PC-3 (cell line): ENCODE measurements at regions of chrX and their contacts with region 1.

Region 1: DNA sequence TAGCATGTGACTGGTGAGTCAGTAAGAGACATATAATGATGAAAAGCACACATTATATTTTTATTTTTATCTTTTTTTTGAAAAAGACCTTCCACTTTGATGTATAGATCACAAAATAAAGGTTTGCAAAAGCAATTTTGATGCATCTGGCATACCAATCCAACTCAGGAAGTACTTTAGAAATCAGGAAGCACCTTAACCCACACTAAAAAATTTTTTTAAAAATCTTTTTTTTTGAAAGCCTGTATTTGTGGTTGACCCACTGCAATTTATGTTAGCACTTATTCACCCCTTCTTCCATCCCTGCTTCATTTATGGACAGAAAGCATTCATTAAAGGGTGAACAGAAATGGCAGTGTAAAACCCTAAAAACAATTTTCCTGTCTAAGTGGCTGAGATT is 16.6 kb downstream of the TMEM255A start:
- DNase-seq: no peak
- ATAC-seq: no peak
- H3K4me3 ChIP-seq: no peak overlapping the region
- H3K27ac ChIP-seq: no peak overlapping the region
- H3K4me1 ChIP-seq: no peaks in the 10 kb centered on the region
- H3K27me3 ChIP-seq: no peaks in the 10 kb centered on the region
- CTCF ChIP-seq: no peak

Region 2: GRCh38 chrX:119916310-119916709 is 378.3 kb before region 1 on chrX:
- CTCF ChIA-PET with region 1: no interaction called
- POLR2A ChIA-PET with region 1: no interaction called
- intact Hi-C with region 1: no loop called
- DNase-seq: no peak
- ATAC-seq: no peak
- H3K4me3 ChIP-seq: no peak overlapping the region
- H3K27ac ChIP-seq: no peak overlapping the region
- H3K4me1 ChIP-seq: no peaks in the 10 kb centered on the region
- H3K27me3 ChIP-seq: no peaks in the 10 kb centered on the region
- CTCF ChIP-seq: no peak

Region 3: GRCh38 chrX:120308959-120309872 is 14.6 kb after region 1 on chrX:
- CTCF ChIA-PET with region 1: no interaction called
- POLR2A ChIA-PET with region 1: no interaction called
- intact Hi-C with region 1: no loop called
- DNase-seq: peak; percentile 77
- ATAC-seq: peak; percentile 86
- H3K4me3 ChIP-seq: peak overlapping the region; percentile 71
- H3K27ac ChIP-seq: no peak overlapping the region
- H3K4me1 ChIP-seq: peaks cover 19% of the 10 kb centered on the region
- H3K27me3 ChIP-seq: no peaks in the 10 kb centered on the region
- CTCF ChIP-seq: peak; percentile 57

Region 4: DNA sequence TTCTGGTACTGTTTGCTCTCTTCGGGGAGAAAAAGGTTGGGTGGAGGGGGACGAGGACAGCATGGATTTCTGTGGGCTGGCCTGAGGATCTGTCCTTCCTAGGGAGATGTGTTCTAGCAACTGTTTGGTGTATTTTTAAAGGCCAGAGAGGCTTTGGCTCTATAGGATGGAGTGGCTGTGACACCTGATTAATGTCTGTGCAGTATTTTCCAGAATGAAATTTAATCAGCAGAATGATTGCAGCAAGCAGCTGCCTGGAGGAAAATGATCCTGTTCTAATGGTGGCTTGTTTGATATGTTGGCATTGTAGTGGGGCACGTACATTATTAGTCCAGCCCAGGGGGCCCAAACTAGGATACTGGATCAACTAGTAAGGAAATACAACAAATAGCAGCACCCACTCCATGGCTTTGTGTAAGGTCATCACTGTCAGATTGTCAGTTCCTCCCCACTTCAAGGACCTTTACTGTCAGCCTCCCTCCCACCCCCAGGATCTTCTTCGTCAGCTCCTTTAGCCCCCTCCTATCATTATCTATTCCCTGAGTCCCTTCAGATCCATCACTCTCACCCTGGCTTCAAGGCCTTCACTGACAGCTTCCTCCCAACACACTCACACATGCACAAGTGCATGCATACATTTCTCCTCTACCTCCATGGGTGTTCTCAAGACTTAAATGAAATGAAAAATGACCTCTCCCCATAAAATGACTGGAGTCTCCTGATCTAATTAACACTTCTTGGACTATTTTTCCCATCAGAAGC is 27.1 kb after region 1 on chrX:
- CTCF ChIA-PET with region 1: interaction called, 16 read pairs
- POLR2A ChIA-PET with region 1: no interaction called
- intact Hi-C with region 1: no loop called
- DNase-seq: no peak
- ATAC-seq: no peak
- H3K4me3 ChIP-seq: no peak overlapping the region
- H3K27ac ChIP-seq: no peak overlapping the region
- H3K4me1 ChIP-seq: peaks cover 15% of the 10 kb centered on the region
- H3K27me3 ChIP-seq: no peaks in the 10 kb centered on the region
- CTCF ChIP-seq: no peak